CD4-positive, alpha-beta T cell (primary cell): ENCODE measurements at regions of chr10 and their contacts with region 1.

Region 1: DNA sequence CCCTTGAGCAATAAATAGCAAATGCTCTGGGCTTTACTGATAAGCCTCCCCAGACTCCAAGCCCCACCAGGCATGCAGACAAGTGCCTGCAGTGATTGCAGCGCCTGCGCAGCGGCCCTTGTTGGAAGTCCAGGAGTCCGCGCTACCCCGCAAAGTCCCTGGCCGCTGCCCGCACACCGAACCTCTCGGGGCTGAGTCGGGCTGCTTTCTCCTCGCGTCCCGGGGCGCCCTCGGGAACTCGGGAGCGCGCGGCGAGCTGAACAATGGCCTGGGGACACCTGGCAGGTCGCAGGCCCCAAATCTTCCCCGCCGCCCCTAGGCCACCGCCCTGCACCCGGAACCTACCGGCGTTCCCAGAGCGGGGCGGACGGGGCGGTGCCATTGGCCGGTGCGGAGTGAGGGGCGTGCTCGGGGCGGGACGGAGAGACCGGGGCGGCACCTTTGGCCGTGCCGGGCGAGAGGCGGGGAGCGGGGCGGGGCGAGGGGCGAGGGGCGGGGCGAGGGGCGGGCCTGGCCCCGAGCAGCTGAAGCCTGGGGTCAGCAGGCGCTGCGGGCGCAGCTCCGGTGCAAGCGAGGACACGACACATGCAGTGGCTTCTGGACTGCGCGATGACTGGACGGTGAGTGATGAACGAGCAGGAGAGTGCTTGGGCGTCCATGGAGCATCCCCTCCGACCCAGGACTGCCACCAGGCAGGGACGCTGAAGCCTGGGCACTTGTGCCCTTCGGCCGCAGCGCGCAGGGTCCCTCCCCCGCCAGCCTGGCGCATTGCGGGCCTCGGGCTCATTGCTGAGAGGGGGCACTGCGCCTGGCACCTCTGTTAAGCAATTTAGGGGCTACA is at the start of gene RASSF4:
- DNase-seq: peak; percentile 83 to 96 (median 92)
- ATAC-seq: peak; percentile 100
- H3K4me3 ChIP-seq: peak within 1 kb of the TSS; percentile 81
- H3K4me3 Mint-ChIP-seq: peak within 1 kb of the TSS; percentile 93
- H3K27ac ChIP-seq: peak within 1 kb of the TSS in 1 of 2 donors; percentile 29
- H3K27ac Mint-ChIP-seq: peak within 1 kb of the TSS; percentile 79
- H3K4me1 ChIP-seq: peaks cover 26% of the 10 kb centered on the region
- H3K4me1 Mint-ChIP-seq: peaks cover 30% of the 10 kb centered on the region
- H3K27me3 ChIP-seq: no peaks in the 10 kb centered on the region
- H3K27me3 Mint-ChIP-seq: no peaks in the 10 kb centered on the region
- CTCF ChIP-seq: no peak
- total RNA-seq, gene RASSF4: 0.88 to 1.4 TPM

Region 2: DNA sequence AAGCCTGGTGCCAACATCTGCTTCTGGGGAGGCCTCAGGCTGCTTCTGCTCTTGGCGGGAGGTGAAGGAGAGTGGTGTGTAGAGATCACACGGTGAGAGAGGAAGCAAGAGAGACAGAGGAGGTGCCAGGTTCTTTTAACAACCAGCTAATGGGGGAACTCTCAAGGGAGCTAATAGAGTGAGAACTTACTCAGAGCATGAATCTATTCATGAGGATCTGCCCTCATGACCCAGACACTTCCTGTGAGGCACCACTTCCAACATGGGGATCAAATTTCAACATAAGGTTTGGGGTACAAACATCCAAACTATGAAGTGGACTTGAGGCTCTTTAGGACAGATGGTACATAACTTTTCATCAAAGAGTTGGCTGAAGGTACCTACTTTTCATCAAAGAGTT is 1305.7 kb before region 1 on chr10:
- CTCF ChIA-PET with region 1: no interaction called
- POLR2A ChIA-PET with region 1: no interaction called
- intact Hi-C with region 1: loop called in 1 of 2 experiments (anchors 5 kb)
- DNase-seq: no peak
- ATAC-seq: no peak
- H3K4me3 ChIP-seq: no peak overlapping the region
- H3K4me3 Mint-ChIP-seq: no peak overlapping the region
- H3K27ac ChIP-seq: no peak overlapping the region
- H3K27ac Mint-ChIP-seq: no peak overlapping the region
- H3K4me1 ChIP-seq: peaks cover 8% of the 10 kb centered on the region
- H3K4me1 Mint-ChIP-seq: peaks cover 9% of the 10 kb centered on the region
- H3K27me3 ChIP-seq: peaks cover 0 to 6% of the 10 kb centered on the region in 2 experiments
- H3K27me3 Mint-ChIP-seq: peaks cover 19% of the 10 kb centered on the region
- CTCF ChIP-seq: no peak

Region 3: DNA sequence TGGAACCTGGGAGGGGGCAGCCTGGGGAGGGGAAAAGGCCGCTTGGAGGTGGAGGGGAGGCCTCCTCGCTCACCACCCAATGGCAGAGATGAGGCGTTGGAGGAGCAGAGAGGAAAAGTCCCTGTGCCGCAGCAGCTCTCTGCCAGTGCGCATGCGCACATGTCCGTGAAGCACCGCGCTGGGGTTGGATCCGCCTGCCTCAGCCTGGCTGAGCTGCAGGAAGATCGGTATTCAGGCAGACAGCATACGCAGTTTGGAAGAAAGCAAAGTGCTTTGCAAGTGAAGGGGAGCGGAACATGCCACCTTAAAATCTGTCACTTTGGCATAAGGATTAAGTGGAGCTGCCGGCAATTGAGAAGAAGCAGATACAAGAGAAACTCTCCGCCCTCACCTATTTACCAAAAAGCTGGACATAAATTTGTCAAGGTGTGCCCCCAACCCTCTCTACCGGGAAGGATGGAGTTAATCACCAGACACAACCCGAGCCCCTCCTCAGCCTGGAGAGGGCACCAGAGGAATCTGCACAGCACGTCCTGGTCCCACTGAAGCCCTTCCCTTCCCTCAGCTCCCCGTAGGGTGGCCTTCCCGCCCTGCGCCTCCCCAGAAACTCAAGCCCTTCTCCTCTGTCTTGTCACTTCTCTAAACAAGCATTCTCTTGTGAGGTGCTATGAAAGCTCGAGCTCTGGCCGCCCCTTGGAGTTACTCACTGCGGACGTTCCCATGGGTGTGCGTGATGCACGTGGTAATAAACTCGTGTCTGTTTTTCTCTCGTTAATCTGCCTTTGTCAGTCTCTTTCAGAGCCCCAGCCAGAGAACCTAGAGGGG is 80.5 kb before region 1 on chr10:
- CTCF ChIA-PET with region 1: no interaction called
- POLR2A ChIA-PET with region 1: interaction called, 3 read pairs
- intact Hi-C with region 1: loop called in 1 of 2 experiments (anchors 5 kb)
- DNase-seq: peak; percentile 49 to 91 (median 72)
- ATAC-seq: peak; percentile 91
- H3K4me3 ChIP-seq: peak overlapping the region; percentile 53
- H3K4me3 Mint-ChIP-seq: peak overlapping the region; percentile 88
- H3K27ac ChIP-seq: no peak overlapping the region
- H3K27ac Mint-ChIP-seq: peak overlapping the region; percentile 71
- H3K4me1 ChIP-seq: peaks cover 10% of the 10 kb centered on the region
- H3K4me1 Mint-ChIP-seq: peaks cover 6% of the 10 kb centered on the region
- H3K27me3 ChIP-seq: peaks cover 0 to 5% of the 10 kb centered on the region in 2 experiments
- H3K27me3 Mint-ChIP-seq: peaks cover 16% of the 10 kb centered on the region
- CTCF ChIP-seq: no peak

Region 4: DNA sequence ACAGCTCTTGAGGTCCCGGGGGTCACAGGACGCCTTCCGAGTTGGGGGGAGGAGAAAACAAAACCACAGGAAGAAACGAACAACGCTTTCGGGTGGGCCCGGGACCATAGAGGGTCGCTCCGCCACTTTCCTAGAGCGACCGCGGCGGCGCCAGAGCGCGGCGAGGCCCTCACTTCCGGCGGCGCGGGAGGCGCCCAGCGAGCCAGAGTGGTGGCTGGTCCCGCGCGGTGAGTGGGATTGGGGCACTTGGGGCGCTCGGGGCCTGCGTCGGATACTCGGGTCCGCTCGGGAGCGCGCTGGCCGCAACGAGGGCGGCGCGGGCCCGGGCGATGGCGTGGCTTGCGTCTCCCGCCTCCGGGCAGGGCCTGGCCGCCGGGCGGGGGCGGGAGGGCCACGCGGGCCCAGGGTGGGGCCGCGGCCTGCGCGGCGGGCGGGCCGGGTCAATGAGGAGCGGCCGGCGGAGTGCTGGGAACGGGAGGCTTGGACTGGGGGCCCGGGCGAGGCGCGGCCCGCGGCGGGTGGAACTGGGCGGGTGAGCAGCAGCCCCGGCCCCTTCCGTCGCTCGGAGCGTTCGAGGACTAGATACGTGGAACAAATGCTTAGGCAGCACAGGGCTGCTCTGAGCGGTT is 41.4 kb after region 1 on chr10 and contains the start of gene ZNF22:
- CTCF ChIA-PET with region 1: no interaction called
- POLR2A ChIA-PET with region 1: interaction called, 3 read pairs
- intact Hi-C with region 1: loop called in 1 of 2 experiments (anchors 1 kb)
- DNase-seq: peak; percentile 31 to 82 (median 62)
- ATAC-seq: peak; percentile 78
- H3K4me3 ChIP-seq: peak within 1 kb of the TSS; percentile 73
- H3K4me3 Mint-ChIP-seq: peak within 1 kb of the TSS; percentile 90
- H3K27ac ChIP-seq: peak within 1 kb of the TSS in 1 of 2 donors; percentile 33
- H3K27ac Mint-ChIP-seq: peak within 1 kb of the TSS; percentile 91
- H3K4me1 ChIP-seq: peaks cover 20% of the 10 kb centered on the region
- H3K4me1 Mint-ChIP-seq: peaks cover 37% of the 10 kb centered on the region
- H3K27me3 ChIP-seq: no peaks in the 10 kb centered on the region
- H3K27me3 Mint-ChIP-seq: no peaks in the 10 kb centered on the region
- CTCF ChIP-seq: peak; percentile 13
- total RNA-seq, gene ZNF22: 14.1 to 15.3 TPM